HCT116 (cell line): ENCODE measurements at regions of chr3 and their contacts with region 1.

Region 1: DNA sequence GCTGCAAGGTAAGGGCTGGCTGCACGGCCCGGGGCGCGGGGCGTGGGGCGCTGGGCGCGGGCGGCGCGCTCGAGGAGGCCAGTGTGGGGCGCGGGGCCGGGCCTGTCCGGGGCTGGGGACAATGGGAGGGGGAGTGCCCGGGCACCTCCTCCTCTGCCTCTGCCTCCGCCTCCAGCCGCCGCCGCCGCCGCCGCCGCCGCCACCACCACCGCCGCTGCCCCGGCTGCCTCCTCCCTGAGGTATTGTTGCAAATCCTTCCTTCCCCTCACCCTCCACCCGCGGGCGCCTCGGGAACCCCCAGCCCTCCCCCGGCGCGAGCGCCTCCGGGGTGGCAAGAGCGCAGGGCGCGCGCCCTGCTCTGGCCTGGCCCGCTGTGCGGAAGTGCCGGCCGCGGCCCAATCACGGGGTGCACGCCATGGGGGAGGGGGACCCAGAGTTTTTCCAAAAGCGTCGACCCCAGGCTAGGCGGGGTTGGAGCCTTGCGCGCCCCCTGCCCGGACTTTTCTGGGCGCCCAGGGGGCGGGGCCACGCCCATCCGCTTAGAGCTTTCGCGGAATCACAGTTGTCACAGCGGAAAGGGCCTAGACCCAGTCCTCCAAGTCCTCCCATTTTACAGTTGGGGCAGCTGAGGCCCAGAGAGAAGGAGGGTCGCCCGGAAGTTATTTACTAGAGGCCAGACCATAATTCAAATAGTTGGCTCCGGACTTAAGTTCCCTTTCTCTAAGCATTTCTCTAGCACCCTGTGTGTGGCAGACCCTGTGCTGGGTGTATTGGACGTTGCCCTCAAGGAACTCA is at the start of gene LPP:
- DNase-seq: no peak
- ATAC-seq: peak; percentile 88
- H3K4me3 ChIP-seq: peak within 1 kb of the TSS; percentile 68 to 73
- H3K27ac ChIP-seq: peak within 1 kb of the TSS; percentile 79
- H3K4me1 ChIP-seq: peaks cover 13 to 55% of the 10 kb centered on the region in 2 experiments
- H3K27me3 ChIP-seq: no peaks in the 10 kb centered on the region
- CTCF ChIP-seq: no peak
- POLR2A ChIP-seq: peak; percentile 10
- RAD21 ChIP-seq: 0 out of 2 replicates have a peak, but pooled peaks have one; percentile 6
- total RNA-seq, gene LPP: 54.0 TPM

Region 2: GRCh38 chr3:188294823-188295487 is 140.7 kb after region 1 on chr3:
- CTCF ChIA-PET with region 1: no interaction called
- POLR2A ChIA-PET with region 1: no interaction called
- RAD21 ChIA-PET with region 1: no interaction called
- intact Hi-C with region 1: loop called (anchors 5 kb)
- DNase-seq: peak; percentile 90
- ATAC-seq: peak; percentile 84
- H3K4me3 ChIP-seq: peak overlapping the region; percentile 1 to 47; a peak in 3 of 4 replicates
- H3K27ac ChIP-seq: peak overlapping the region; percentile 67
- H3K4me1 ChIP-seq: peaks cover 61 to 85% of the 10 kb centered on the region in 2 experiments
- H3K27me3 ChIP-seq: no peaks in the 10 kb centered on the region
- CTCF ChIP-seq: 0 out of 6 replicates have a peak, but pooled peaks of 1 of the 3 experiments have one; percentile 4
- POLR2A ChIP-seq: no peak
- RAD21 ChIP-seq: peak; percentile 51